Endothelial cell of umbilical vein (primary cell): ENCODE measurements at regions of chr4 and their contacts with region 1.

Region 1: GRCh38 chr4:41550308-41550707 is 12.4 kb downstream of the LIMCH1 start:
- DNase-seq: peak; percentile 62
- H3K4me3 ChIP-seq: no peak overlapping the region
- H3K27ac ChIP-seq: no peak overlapping the region
- H3K4me1 ChIP-seq: peaks cover 3% of the 10 kb centered on the region
- H3K27me3 ChIP-seq: peaks cover 4 to 7% of the 10 kb centered on the region in 2 experiments
- CTCF ChIP-seq: no peak
- POLR2A ChIP-seq: no peak

Region 2: DNA sequence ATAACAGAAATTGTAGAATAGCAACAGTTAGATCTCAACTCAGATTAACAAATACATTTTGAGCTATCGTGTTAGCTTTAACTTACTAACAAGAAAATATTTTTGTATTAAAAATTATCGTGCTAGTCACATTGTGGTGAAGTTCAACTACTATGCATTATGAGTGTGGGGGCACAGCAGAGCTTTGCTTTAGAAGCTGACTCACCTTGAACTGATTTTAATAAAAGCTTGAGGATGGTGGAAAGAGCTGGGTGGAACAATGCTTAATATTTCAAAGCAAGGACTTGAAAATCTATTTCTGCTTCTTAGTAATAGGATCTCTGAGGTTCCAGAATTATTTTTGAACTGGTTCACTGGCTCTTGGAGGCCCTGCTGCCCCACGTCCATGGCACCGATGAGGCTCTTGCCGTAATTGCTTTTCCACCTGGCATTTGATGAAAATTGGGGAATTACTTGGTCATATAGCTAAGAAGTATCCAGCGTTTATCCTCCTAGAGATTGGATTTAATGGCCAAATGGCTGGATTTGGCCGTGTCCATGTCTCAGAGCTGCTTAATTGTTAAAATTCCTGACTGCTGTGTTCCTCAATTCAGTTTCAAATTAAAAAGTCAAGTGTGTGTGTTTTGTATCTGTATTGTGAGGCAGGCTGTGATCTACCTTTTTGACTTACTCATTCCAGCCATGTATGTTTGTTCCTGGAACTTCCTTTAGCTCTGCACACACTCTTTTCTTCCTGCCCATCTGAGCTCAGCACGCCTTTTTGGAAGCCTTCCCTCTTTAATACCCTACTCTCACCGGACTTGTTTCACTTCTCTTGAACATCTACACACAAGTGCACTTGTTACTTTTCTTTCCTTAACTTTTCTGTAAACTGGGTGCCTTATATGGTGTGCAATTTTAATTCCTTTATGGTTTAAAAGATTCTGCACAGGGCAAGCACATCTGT is 78.9 kb before region 1 on chr4:
- CTCF ChIA-PET with region 1: no interaction called
- POLR2A ChIA-PET with region 1: no interaction called
- dilution Hi-C with region 1: no loop called
- intact Hi-C with region 1: no loop called
- DNase-seq: no peak
- H3K4me3 ChIP-seq: no peak overlapping the region
- H3K27ac ChIP-seq: no peak overlapping the region
- H3K4me1 ChIP-seq: no peaks in the 10 kb centered on the region
- H3K27me3 ChIP-seq: peaks cover 9 to 18% of the 10 kb centered on the region in 2 experiments
- CTCF ChIP-seq: no peak
- POLR2A ChIP-seq: no peak

Region 3: DNA sequence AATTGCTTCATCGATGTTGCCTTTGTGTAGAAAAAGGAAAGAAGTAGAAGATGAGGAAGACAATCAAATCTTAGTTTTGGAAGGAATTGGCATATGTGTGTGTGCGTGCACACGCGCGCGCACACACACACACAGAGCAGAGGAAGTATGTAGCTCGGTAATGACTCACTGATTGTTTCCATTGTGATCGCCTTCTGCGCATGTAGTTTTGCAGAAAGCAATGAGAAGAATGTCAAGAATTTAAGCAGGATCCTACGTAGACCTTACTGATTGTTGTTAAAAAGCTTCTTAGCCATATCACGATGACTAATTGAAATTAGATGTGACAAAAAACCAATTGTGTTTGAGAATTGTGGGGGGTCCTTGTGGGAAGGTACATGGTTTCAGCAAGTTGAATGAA is 25.2 kb before region 1 on chr4:
- CTCF ChIA-PET with region 1: no interaction called
- POLR2A ChIA-PET with region 1: no interaction called
- dilution Hi-C with region 1: no loop called
- intact Hi-C with region 1: loop called (anchors 1 kb)
- DNase-seq: peak; percentile 96
- H3K4me3 ChIP-seq: no peak overlapping the region
- H3K27ac ChIP-seq: peak overlapping the region; percentile 98
- H3K4me1 ChIP-seq: peaks cover 21% of the 10 kb centered on the region
- H3K27me3 ChIP-seq: no peaks in the 10 kb centered on the region
- CTCF ChIP-seq: no peak
- POLR2A ChIP-seq: no peak

Region 4: DNA sequence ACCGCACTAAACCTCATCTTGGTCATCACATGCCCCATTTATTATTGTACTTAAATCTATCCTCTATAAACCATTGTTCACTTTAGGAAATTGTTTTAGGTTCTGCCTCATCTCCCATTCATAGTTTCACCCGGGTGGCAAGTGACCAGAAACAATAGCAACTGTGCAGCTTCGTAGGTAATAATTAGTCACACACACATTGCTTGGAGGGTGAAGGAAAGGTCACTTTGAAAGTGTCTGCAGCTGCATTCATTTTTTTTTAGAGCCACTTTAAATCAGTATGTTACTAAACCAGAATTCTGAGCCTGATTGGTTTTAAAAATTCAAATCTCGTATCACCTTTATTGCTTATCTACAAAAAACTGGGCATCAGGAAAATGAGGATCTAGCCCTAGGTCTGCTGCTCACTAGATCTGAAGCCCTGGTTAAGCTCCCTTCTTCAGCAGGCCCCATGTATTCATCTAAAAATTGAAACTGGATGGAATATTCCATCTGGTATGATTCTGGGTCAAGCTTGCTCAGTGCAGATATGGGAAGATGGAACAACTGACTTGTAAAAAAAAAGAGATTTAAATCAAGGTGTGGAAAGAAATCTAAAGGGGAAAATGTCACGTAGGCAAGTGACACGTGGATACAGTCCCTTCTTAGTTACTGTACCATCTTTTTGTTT is 50.1 kb after region 1 on chr4:
- CTCF ChIA-PET with region 1: no interaction called
- POLR2A ChIA-PET with region 1: no interaction called
- dilution Hi-C with region 1: no loop called
- intact Hi-C with region 1: loop called (anchors 5 kb)
- DNase-seq: peak; percentile 93
- H3K4me3 ChIP-seq: no peak overlapping the region
- H3K27ac ChIP-seq: peak overlapping the region; percentile 40
- H3K4me1 ChIP-seq: peaks cover 16% of the 10 kb centered on the region
- H3K27me3 ChIP-seq: peaks cover 0 to 3% of the 10 kb centered on the region in 2 experiments
- CTCF ChIP-seq: no peak
- POLR2A ChIP-seq: no peak